Caco-2 (cell line): ENCODE measurements at regions of chr2 and their contacts with region 1.

Region 1: GRCh38 chr2:201149064-201149820 is 33.3 kb downstream of the CFLAR start:
- DNase-seq: peak; percentile 58 to 63
- H3K4me3 ChIP-seq: no peak overlapping the region
- H3K4me3 Mint-ChIP-seq: peak overlapping the region; percentile 42
- H3K27ac Mint-ChIP-seq: peak overlapping the region; percentile 79
- H3K4me1 ChIP-seq: peaks cover 78% of the 10 kb centered on the region
- H3K4me1 Mint-ChIP-seq: peaks cover 37% of the 10 kb centered on the region
- H3K27me3 ChIP-seq: no peaks in the 10 kb centered on the region
- H3K27me3 Mint-ChIP-seq: no peaks in the 10 kb centered on the region
- CTCF ChIP-seq: no peak

Region 2: DNA sequence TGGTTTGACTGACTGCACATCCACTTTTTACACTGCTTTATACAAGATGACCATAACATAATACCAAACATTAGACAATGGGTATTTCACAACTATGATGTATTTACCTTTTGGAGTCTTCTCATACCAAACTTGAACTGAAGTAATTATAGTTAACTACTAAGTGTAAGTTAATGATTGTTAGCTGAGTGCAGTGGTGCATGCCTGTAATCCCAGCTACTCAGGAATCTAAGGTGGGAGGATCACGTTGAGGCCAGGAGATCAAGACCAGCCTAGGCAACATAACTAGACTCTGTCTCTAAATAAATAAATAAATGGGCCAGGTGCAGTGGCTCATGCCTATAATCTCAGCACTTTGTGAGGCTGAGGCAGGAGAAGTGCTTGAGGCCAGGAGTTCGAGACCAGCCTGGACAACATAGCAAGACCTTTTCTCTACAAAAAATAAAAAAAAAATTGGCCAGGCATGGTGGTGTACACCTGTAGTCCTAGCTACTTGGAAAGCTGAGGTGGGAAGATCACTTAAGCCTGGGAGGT is 140.9 kb before region 1 on chr2:
- CTCF ChIA-PET with region 1: no interaction called
- POLR2A ChIA-PET with region 1: no interaction called
- intact Hi-C with region 1: loop called (anchors 2 kb)
- DNase-seq: peak; percentile 78 to 87
- H3K4me3 ChIP-seq: no peak overlapping the region
- H3K4me3 Mint-ChIP-seq: peak overlapping the region; percentile 31
- H3K27ac Mint-ChIP-seq: peak overlapping the region; percentile 75
- H3K4me1 ChIP-seq: peaks cover 28% of the 10 kb centered on the region
- H3K4me1 Mint-ChIP-seq: peaks cover 19% of the 10 kb centered on the region
- H3K27me3 ChIP-seq: no peaks in the 10 kb centered on the region
- H3K27me3 Mint-ChIP-seq: no peaks in the 10 kb centered on the region
- CTCF ChIP-seq: no peak

Region 3: DNA sequence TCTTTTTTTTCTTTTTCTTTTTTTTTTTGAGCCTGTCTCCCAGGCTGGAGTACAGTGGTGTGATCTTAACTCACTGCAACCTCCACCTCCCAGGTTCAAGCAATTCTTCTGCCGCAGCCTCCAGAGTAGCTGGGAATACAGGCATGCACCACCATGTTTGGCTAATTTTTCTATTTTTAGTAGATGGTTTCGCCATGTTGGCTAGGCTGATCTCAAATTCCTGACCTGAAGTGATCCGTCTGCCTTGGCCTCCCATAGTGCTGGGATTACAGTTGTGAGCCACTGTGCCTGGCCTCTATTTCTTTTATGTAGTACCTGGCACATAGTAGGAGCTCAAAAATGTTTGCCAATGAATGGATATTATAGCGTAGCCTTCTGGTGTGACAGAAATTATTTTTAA is 40.1 kb before region 1 on chr2:
- CTCF ChIA-PET with region 1: no interaction called
- POLR2A ChIA-PET with region 1: no interaction called
- intact Hi-C with region 1: no loop called
- DNase-seq: no peak
- H3K4me3 ChIP-seq: no peak overlapping the region
- H3K4me3 Mint-ChIP-seq: no peak overlapping the region
- H3K27ac Mint-ChIP-seq: no peak overlapping the region
- H3K4me1 ChIP-seq: no peaks in the 10 kb centered on the region
- H3K4me1 Mint-ChIP-seq: no peaks in the 10 kb centered on the region
- H3K27me3 ChIP-seq: no peaks in the 10 kb centered on the region
- H3K27me3 Mint-ChIP-seq: no peaks in the 10 kb centered on the region
- CTCF ChIP-seq: no peak

Region 4: DNA sequence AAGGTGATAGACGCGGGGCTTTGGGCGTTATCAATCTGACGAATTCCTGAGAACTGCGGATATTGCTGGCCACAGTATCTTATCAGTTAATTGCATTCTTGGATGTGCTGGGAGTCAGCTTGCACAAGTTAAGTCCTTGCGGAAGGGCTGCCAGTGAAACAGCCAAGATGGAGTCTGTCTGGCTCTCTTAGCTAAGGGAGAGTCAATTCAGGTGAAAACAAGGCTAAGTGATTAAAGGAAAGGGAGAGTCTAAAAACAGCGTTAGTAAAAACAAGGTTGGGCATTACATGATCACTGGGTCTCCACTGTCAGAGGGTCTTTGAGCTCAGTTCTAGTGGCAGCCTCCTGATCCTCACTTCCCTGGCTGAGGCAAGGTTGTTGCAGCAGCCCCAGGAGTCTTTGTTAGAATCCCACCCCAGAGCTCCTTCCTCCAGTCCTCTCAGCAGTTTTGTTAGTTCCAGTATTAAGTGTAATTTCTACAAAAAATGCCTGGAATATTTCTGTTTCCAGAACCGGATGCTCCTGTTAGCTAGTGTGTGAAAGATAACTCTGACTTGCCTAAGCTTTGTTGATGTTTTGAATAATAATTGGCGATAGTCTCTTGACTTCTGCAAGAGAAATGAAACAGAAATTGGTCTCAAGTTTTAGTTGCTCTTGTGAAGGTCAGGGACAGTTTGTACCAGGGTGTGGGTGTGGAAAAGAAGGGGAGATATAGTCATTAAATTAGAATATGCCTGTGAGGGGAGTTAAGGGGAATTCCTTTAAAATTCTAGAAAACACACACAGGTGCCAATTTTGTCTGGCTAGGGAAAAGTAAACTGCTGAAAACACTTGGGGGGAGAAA is 22.7 kb before region 1 on chr2:
- CTCF ChIA-PET with region 1: interaction called, 5 read pairs
- POLR2A ChIA-PET with region 1: interaction called, 5 read pairs
- intact Hi-C with region 1: loop called (anchors 1 kb)
- DNase-seq: peak; percentile 74 to 88
- H3K4me3 ChIP-seq: no peak overlapping the region
- H3K4me3 Mint-ChIP-seq: peak overlapping the region; percentile 67
- H3K27ac Mint-ChIP-seq: peak overlapping the region; percentile 87
- H3K4me1 ChIP-seq: peaks cover 81% of the 10 kb centered on the region
- H3K4me1 Mint-ChIP-seq: peaks cover 61% of the 10 kb centered on the region
- H3K27me3 ChIP-seq: no peaks in the 10 kb centered on the region
- H3K27me3 Mint-ChIP-seq: no peaks in the 10 kb centered on the region
- CTCF ChIP-seq: no peak

Region 5: DNA sequence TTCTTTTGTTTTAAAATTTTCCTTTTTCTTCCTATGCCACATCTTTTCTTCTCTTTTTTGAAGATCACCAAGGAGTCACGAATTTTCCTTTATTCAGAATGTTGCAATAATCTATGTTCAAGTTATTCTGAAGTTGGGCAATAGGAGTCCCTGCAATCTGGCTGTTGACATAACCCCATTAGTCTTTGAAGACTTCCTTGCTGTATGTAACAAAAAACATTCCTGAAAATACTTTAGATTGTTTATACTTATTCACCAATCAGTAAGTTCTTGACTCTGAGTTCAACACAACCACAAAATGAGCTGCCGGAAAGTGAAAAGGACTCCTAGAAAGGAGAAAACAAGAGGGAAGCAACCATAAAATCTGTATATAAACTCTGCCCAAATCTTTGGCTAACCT is 431.2 kb after region 1 on chr2:
- CTCF ChIA-PET with region 1: no interaction called
- POLR2A ChIA-PET with region 1: no interaction called
- intact Hi-C with region 1: no loop called
- DNase-seq: peak in 1 of 2 experiments; percentile 45
- H3K4me3 ChIP-seq: no peak overlapping the region
- H3K4me3 Mint-ChIP-seq: peak overlapping the region; percentile 13
- H3K27ac Mint-ChIP-seq: peak overlapping the region; percentile 65
- H3K4me1 ChIP-seq: peaks cover 19% of the 10 kb centered on the region
- H3K4me1 Mint-ChIP-seq: peaks cover 20% of the 10 kb centered on the region
- H3K27me3 ChIP-seq: no peaks in the 10 kb centered on the region
- H3K27me3 Mint-ChIP-seq: no peaks in the 10 kb centered on the region
- CTCF ChIP-seq: no peak